ENCODE measurements at regions of chr3 and their contacts with region 1.

Region 1: DNA sequence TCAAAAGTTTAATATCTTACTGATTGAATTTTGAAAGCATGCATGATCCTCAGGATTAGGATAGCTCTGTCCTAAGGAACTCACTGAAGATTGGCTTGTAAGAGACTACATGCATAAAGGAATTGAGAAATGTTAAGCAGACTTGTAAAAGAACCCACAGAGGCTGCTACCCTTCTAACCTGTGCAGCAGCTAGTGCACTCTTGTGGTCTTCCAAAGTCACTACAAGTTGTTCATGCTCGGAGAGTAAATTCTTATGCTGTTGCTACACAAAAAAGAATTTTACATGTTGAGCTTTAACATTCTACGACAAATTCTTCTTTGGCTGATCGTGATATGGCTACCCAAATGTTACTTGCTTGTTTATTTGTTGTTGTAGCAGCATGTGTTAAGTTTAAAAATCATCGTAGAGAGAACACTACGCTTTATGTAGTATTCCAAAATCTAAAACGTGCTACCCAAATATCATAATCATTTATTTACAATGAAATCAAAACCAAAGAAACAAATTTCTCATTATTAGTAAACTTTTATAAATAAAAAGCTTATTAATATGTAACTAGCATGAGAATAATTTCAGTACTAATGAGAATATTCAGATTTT is 55.0 kb downstream of the GOLIM4 start:
- DNase-seq: peak; percentile 29
- H3K4me3 ChIP-seq: no peak overlapping the region
- H3K27ac ChIP-seq: no peak overlapping the region
- H3K4me1 ChIP-seq: no peaks in the 10 kb centered on the region
- H3K27me3 ChIP-seq: no peaks in the 10 kb centered on the region
- CTCF ChIP-seq: peak; percentile 54 to 76

Region 2: GRCh38 chr3:167839460-167840134 is 201.1 kb before region 1 on chr3:
- CTCF ChIA-PET with region 1: no interaction called
- dilution Hi-C with region 1: no loop called
- in situ Hi-C with region 1: no loop called
- intact Hi-C with region 1: loop called (anchors 2 kb)
- DNase-seq: peak; percentile 39
- H3K4me3 ChIP-seq: no peak overlapping the region
- H3K27ac ChIP-seq: no peak overlapping the region
- H3K4me1 ChIP-seq: peaks cover 9% of the 10 kb centered on the region
- H3K27me3 ChIP-seq: no peaks in the 10 kb centered on the region
- CTCF ChIP-seq: no peak

Region 3: GRCh38 chr3:167929968-167930367 is 110.7 kb before region 1 on chr3:
- CTCF ChIA-PET with region 1: no interaction called
- dilution Hi-C with region 1: no loop called
- in situ Hi-C with region 1: no loop called
- intact Hi-C with region 1: loop called (anchors 1 kb)
- DNase-seq: no peak
- H3K4me3 ChIP-seq: no peak overlapping the region
- H3K27ac ChIP-seq: no peak overlapping the region
- H3K4me1 ChIP-seq: no peaks in the 10 kb centered on the region
- H3K27me3 ChIP-seq: no peaks in the 10 kb centered on the region
- CTCF ChIP-seq: no peak

Region 4: DNA sequence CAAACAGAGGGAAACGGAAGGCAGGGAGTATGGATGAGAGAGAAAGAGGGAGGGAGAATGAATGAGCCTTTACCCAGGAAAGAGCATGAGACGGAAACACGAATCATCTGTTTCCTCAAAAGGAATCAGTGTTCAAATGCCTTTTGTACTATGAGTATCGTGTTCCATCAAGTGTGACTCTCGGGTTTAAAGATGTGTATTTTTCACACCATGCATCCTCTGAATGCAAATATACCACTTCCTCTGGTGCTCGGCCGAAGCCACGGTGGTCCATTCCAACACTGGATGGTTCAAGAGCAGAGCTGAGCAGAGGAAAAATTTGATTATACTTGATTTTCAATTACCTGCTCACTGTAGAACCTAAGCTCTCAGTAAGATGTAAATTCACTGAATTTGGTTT is 1117.7 kb after region 1 on chr3:
- CTCF ChIA-PET with region 1: no interaction called
- dilution Hi-C with region 1: no loop called
- in situ Hi-C with region 1: no loop called
- intact Hi-C with region 1: no loop called
- DNase-seq: no peak
- H3K4me3 ChIP-seq: no peak overlapping the region
- H3K27ac ChIP-seq: no peak overlapping the region
- H3K4me1 ChIP-seq: peaks cover 5% of the 10 kb centered on the region
- H3K27me3 ChIP-seq: no peaks in the 10 kb centered on the region
- CTCF ChIP-seq: no peak

Measured in mammary epithelial cell (primary cell).